ENCODE measurements at regions of chr18 and their contacts with region 1.

Region 1: GRCh38 chr18:3245853-3246634 is 1.6 kb upstream of the MYL12A start:
- DNase-seq: peak; percentile 91
- H3K4me3 ChIP-seq: peak overlapping the region; percentile 26 to 75 (median 66)
- H3K27ac ChIP-seq: peak overlapping the region; percentile 83
- H3K4me1 ChIP-seq: peaks cover 26% of the 10 kb centered on the region
- H3K27me3 ChIP-seq: no peaks in the 10 kb centered on the region
- CTCF ChIP-seq: peak; percentile 96
- POLR2A ChIP-seq: no peak

Region 2: GRCh38 chr18:1585879-1586488 is 1660.1 kb before region 1 on chr18:
- CTCF ChIA-PET with region 1: interaction called, 9 read pairs
- POLR2A ChIA-PET with region 1: no interaction called
- dilution Hi-C with region 1: no loop called
- intact Hi-C with region 1: loop called (anchors 5 kb)
- DNase-seq: peak; percentile 42
- H3K4me3 ChIP-seq: no peak overlapping the region
- H3K27ac ChIP-seq: no peak overlapping the region
- H3K4me1 ChIP-seq: no peaks in the 10 kb centered on the region
- H3K27me3 ChIP-seq: no peaks in the 10 kb centered on the region
- CTCF ChIP-seq: peak in 1 of 2 donors; percentile 23
- POLR2A ChIP-seq: no peak

Region 3: DNA sequence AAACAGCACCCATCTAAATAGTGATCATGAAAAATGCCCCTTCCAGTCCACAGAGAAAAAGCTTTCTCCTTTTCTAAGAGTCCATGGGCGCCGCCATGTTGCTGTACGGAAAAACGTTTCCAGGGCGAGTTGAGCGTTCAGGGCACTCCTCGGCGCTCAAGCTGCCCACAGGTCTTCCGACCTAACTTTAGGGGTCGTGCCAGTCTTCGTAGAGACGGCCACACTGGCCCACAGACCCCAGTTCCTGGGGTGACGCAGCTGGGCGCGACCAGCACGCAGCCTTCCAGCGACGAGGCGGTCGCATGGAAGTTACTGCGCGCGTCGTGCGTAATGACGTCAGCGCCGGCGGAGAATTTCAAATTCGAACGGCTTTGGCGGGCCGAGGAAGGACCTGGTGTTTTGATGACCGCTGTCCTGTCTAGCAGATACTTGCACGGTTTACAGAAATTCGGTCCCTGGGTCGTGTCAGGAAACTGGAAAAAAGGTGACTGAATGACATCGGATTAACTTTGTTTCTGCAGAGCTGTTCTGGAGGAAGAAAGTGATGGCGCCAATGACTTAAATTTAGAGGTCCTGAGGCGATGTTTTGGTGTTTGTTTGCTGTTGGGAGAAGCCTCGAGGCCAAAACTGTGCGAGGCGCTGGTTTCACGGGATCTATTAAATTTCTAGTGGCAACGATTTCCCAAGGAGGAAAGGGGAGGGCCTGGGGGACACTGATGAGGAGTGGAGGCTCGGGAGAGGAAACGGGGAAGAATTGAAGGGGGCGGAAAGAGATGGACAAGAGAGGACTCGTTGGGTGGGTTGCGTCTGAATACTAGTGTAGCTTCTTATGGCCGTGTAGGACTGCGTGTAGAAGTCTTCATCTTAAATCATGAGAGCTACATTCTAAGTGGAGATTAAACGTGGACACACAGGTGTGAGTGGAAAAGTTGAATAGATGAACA is 674.6 kb before region 1 on chr18 and contains the starts of genes METTL4 and NDC80:
- CTCF ChIA-PET with region 1: interaction called, 4 read pairs
- POLR2A ChIA-PET with region 1: interaction called, 3 read pairs
- dilution Hi-C with region 1: no loop called
- intact Hi-C with region 1: loop called (anchors 1 kb)
- DNase-seq: peak; percentile 96
- H3K4me3 ChIP-seq: peak within 1 kb of the TSS; percentile 80 to 92 (median 89)
- H3K27ac ChIP-seq: peak within 1 kb of the TSS; percentile 92
- H3K4me1 ChIP-seq: peaks cover 32% of the 10 kb centered on the region
- H3K27me3 ChIP-seq: no peaks in the 10 kb centered on the region
- CTCF ChIP-seq: no peak
- POLR2A ChIP-seq: no peak
- total RNA-seq, gene METTL4: 16.1 and 17.4 TPM in 2 replicates
- total RNA-seq, gene NDC80: 39.6 and 43.2 TPM in 2 replicates

Region 4: DNA sequence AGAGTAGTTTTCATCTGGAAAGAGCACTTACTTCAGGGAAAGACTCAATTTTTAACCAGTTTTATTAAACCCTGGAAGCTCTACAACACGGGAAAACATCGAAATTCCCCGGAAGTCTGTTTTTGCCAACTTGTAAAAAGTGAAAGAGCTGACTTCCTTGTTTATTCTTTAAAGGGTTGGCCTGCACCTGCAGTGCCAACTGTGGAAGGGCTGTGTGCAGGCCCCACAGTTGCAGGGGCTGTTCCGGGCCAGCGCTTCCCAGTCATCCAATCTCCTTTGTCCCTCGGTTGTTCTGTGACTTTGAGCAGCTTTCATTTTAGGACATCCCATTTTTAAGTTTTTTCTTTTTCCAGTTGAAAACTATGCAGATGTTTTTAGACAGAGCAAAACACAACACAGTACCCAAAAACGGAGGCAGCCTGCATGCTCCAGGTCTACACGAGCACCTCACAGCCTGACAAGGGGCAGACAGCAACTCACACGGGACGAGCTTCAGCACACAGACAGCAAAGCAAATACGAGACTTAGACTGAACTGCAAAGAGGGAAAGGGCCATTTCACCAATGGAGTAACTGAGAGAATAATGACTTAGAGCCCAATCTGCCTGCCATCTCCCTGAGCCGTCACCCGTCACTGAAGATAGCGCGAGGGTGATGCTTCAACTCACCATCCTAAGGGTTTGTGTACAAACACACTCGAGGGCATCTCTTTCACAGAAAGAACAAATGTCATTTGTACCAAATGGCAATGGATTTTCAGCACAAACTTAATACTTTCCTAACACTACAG is 328.6 kb before region 1 on chr18:
- CTCF ChIA-PET with region 1: no interaction called
- POLR2A ChIA-PET with region 1: no interaction called
- dilution Hi-C with region 1: no loop called
- intact Hi-C with region 1: loop called (anchors 2 kb)
- DNase-seq: peak; percentile 56
- H3K4me3 ChIP-seq: no peak overlapping the region
- H3K27ac ChIP-seq: no peak overlapping the region
- H3K4me1 ChIP-seq: peaks cover 18% of the 10 kb centered on the region
- H3K27me3 ChIP-seq: no peaks in the 10 kb centered on the region
- CTCF ChIP-seq: no peak
- POLR2A ChIP-seq: no peak

Region 5: GRCh38 chr18:2985628-2986027 is 260.4 kb before region 1 on chr18:
- CTCF ChIA-PET with region 1: interaction called, 7 read pairs
- POLR2A ChIA-PET with region 1: no interaction called
- dilution Hi-C with region 1: no loop called
- intact Hi-C with region 1: loop called (anchors 1 kb)
- DNase-seq: peak; percentile 48
- H3K4me3 ChIP-seq: no peak overlapping the region
- H3K27ac ChIP-seq: no peak overlapping the region
- H3K4me1 ChIP-seq: peaks cover 49% of the 10 kb centered on the region
- H3K27me3 ChIP-seq: no peaks in the 10 kb centered on the region
- CTCF ChIP-seq: peak; percentile 26 to 39
- POLR2A ChIP-seq: no peak

Region 6: DNA sequence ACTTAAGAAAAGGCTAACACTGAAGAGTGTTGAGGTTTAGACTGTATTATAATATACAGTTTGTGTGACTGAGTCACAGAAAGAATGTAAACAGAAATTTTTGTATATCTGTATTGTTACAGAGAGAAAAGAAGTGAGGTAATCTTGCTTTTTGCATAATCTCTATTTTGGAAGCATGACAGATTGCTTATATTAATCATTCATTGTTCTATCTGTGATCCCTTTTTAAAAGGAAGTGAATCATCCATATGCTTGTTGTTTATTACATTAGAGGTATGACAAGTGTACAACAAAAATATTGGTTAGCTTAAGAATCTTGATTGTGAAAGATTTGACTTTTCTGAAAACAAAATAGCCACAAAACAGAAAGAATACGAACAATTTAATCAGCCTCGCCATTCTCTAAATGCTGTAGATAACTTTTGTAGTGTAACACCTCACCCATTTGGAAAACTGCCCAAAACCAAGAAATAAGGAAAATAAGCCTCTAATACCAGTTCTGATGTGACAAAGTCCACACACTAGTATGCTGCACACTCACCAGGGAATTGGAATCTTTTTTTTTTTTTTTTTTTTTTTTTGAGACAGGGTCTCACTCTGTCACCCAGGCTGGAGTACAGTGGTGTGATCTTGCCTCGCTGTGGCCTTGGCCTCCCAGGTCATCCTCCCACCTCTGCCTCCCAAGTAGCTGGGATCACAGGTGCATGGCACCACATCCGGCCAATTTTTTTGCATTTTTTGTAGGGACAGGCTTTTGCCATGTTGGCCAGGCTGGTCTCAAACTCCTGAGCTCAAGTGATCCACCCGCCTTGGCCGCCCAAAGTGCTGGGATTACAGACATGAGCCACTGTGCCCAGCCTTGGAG is 141.6 kb before region 1 on chr18:
- CTCF ChIA-PET with region 1: no interaction called
- POLR2A ChIA-PET with region 1: no interaction called
- dilution Hi-C with region 1: no loop called
- intact Hi-C with region 1: loop called (anchors 1 kb)
- DNase-seq: peak; percentile 91
- H3K4me3 ChIP-seq: peak overlapping the region in 1 of 3 experiments; percentile 21
- H3K27ac ChIP-seq: peak overlapping the region; percentile 96
- H3K4me1 ChIP-seq: peaks cover 30% of the 10 kb centered on the region
- H3K27me3 ChIP-seq: no peaks in the 10 kb centered on the region
- CTCF ChIP-seq: no peak
- POLR2A ChIP-seq: no peak

Region 7: GRCh38 chr18:3454365-3455089 is 208.5 kb after region 1 on chr18:
- CTCF ChIA-PET with region 1: interaction called, 3 read pairs
- POLR2A ChIA-PET with region 1: no interaction called
- dilution Hi-C with region 1: loop called (anchors 25 kb)
- intact Hi-C with region 1: loop called (anchors 1 kb)
- DNase-seq: peak; percentile 95
- H3K4me3 ChIP-seq: peak overlapping the region; percentile 43 to 92 (median 90)
- H3K27ac ChIP-seq: peak overlapping the region; percentile 98
- H3K4me1 ChIP-seq: peaks cover 54% of the 10 kb centered on the region
- H3K27me3 ChIP-seq: no peaks in the 10 kb centered on the region
- CTCF ChIP-seq: peak; percentile 51 to 60
- POLR2A ChIP-seq: no peak